SK-N-SH (cell line): ENCODE measurements at regions of chr17 and their contacts with region 1.

Region 1: DNA sequence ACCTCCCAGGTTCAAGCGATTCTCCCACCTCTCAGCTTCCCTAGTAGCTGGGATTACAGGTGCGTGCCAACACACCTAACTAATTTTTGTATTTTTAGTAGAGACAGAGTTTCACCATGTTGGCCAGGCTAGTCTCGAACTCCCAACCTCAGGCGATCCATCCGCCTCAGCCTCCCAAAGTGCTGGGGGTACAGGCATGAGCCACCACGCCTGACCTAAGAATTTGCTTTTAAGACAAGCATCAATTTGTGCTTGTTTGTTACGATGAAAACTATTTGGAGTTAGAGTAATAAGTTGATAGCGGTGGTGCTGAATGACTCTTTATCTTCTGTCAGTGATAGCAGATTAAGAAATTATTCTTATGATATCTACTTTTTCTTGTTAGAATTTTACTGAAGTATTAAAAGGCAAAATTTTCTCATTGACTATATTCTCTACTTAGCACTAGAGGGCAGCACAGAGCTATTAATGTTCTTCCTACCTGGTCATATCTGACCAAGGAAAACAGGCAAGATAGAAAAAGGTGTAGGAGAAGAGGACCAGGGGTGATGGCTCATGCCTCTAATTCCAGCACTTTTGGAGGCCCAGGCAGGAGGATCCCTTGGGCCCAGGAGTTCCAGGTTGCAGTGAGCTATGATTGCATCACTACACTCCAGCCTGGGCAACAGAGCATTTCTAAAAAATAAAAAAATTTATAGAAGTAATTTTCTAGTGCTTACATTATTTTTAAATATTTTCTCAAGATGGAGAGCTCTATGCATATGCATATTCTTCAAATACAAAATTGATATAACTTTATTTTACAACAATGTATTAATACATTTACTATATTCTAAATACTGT is 24.5 kb downstream of the STXBP4 start:
- DNase-seq: peak; percentile 59
- H3K4me3 ChIP-seq: no peak overlapping the region
- H3K27ac ChIP-seq: no peak overlapping the region
- H3K4me1 ChIP-seq: no peaks in the 10 kb centered on the region; a peak in 1 of 4 replicates
- H3K27me3 ChIP-seq: no peaks in the 10 kb centered on the region
- CTCF ChIP-seq: peak; percentile 96
- EP300 ChIP-seq: no peak
- RAD21 ChIP-seq: peak; percentile 91

Region 2: GRCh38 chr17:54909766-54910165 is 83.3 kb before region 1 on chr17:
- CTCF ChIA-PET with region 1: no interaction called
- POLR2A ChIA-PET with region 1: no interaction called
- DNase-seq: no peak
- H3K4me3 ChIP-seq: no peak overlapping the region
- H3K27ac ChIP-seq: no peak overlapping the region
- H3K4me1 ChIP-seq: peaks cover 0 to 3% of the 10 kb centered on the region in 2 experiments; a peak in 2 of 4 replicates
- H3K27me3 ChIP-seq: no peaks in the 10 kb centered on the region
- CTCF ChIP-seq: no peak
- EP300 ChIP-seq: no peak
- RAD21 ChIP-seq: no peak

Region 3: DNA sequence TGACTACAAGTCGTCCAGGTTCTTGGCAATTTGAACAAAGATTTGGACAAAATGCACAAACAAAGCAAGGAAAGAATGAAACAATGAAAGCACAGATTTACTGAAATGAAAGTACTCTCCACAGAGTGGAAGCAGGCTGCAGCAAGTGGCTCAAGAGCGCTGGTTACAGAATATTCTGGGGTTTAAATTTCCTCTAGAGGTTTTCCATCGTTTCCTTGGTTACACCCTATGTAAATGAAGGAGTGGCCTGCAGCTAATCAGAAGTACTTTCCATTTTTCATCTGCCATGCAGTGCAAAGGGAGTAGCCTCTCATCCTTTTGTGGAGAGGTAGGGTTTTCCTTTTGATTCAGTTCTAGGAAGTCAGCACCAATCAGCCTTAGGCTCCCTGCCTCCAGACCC is 12.6 kb before region 1 on chr17:
- CTCF ChIA-PET with region 1: interaction called, 11 read pairs
- POLR2A ChIA-PET with region 1: no interaction called
- DNase-seq: no peak
- H3K4me3 ChIP-seq: no peak overlapping the region
- H3K27ac ChIP-seq: no peak overlapping the region
- H3K4me1 ChIP-seq: peaks cover 0 to 11% of the 10 kb centered on the region in 2 experiments; a peak in 2 of 4 replicates
- H3K27me3 ChIP-seq: no peaks in the 10 kb centered on the region
- CTCF ChIP-seq: no peak
- EP300 ChIP-seq: no peak
- RAD21 ChIP-seq: no peak

Region 4: DNA sequence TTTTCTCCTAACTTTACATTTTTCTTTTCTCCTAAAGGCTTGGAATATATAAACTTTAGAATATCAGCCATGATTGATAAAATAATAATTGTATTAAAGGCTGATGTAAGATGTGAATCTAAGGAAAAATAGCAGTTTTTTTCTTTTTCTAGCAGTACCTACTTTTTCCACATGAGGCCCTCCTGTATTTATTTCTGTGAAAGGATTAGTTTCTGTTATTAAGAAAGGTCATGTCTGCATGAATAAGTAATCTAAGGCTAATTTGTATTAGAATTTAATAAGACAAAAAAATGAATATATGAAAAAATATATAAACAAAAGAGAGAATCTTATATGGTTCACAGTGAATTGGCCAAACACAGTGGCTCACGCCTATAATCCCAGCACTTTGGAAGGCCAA is 60.8 kb after region 1 on chr17:
- CTCF ChIA-PET with region 1: interaction called, 11 read pairs
- POLR2A ChIA-PET with region 1: no interaction called
- DNase-seq: peak; percentile 3
- H3K4me3 ChIP-seq: no peak overlapping the region
- H3K27ac ChIP-seq: no peak overlapping the region
- H3K4me1 ChIP-seq: peaks cover 5% of the 10 kb centered on the region in 2 experiments; a peak in 3 of 4 replicates
- H3K27me3 ChIP-seq: no peaks in the 10 kb centered on the region
- CTCF ChIP-seq: peak; percentile 82
- EP300 ChIP-seq: no peak
- RAD21 ChIP-seq: peak; percentile 86

Region 5: DNA sequence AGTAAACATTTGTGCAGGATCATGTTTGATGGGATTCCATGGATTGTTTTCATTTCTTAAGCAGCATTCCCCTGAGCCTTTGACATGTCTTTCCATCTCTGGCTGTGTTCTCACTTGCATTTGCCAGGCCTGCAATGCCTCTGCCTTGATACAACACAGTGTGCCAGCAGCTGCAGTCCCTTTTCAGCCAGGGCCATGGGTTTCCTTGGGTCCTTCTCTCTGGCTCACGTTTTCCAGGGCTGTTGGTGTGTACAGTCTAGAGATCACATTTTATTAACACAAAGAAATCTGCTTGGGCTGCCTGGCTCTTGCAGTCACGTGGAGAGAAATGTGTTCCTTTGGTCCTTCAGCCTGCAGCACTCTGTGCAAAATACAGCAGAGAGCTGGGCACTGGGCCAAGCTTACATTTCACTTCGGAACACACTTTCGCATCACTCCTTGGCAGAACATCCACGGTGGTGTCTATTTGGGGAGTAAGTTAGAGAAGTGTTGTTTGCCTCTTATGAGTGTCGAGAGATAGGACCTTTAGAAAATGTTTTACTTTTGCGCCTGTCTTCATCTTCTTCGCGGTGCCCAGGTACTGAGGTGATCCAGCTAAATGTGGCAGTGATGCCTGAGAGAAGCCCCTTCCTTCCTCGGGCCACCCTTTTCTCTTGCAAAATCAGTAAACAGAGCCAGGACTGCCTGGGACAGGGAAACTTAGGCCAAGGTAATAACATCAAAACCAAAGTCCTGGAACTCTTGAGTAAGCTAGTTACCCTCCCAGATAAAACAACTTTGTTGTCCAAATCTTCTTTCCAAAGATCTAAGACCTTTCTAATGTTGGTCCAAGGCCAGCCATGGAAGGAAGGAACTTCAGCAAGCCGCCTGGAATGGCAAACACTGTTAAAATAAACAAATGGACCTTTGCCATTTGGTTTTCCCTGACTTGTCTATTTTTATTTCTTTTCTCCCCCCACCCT is 292.6 kb after region 1 on chr17:
- CTCF ChIA-PET with region 1: interaction called, 18 read pairs
- POLR2A ChIA-PET with region 1: no interaction called
- DNase-seq: no peak
- H3K4me3 ChIP-seq: no peak overlapping the region
- H3K27ac ChIP-seq: peak overlapping the region in 1 of 2 experiments; percentile 51; a peak in 1 of 4 replicates
- H3K4me1 ChIP-seq: peaks cover 0 to 15% of the 10 kb centered on the region in 2 experiments; a peak in 1 of 4 replicates
- H3K27me3 ChIP-seq: no peaks in the 10 kb centered on the region
- CTCF ChIP-seq: no peak
- EP300 ChIP-seq: no peak
- RAD21 ChIP-seq: no peak

Region 6: GRCh38 chr17:55341432-55341831 is 348.4 kb after region 1 on chr17:
- CTCF ChIA-PET with region 1: interaction called, 90 read pairs
- POLR2A ChIA-PET with region 1: no interaction called
- DNase-seq: no peak
- H3K4me3 ChIP-seq: no peak overlapping the region
- H3K27ac ChIP-seq: no peak overlapping the region
- H3K4me1 ChIP-seq: peaks cover 0 to 3% of the 10 kb centered on the region in 2 experiments; a peak in 1 of 4 replicates
- H3K27me3 ChIP-seq: no peaks in the 10 kb centered on the region
- CTCF ChIP-seq: no peak
- EP300 ChIP-seq: no peak
- RAD21 ChIP-seq: no peak

Region 7: GRCh38 chr17:55356434-55357328 is 363.7 kb after region 1 on chr17:
- CTCF ChIA-PET with region 1: interaction called, 58 read pairs
- POLR2A ChIA-PET with region 1: no interaction called
- DNase-seq: peak; percentile 74
- H3K4me3 ChIP-seq: no peak overlapping the region
- H3K27ac ChIP-seq: no peak overlapping the region
- H3K4me1 ChIP-seq: no peaks in the 10 kb centered on the region; a peak in 1 of 4 replicates
- H3K27me3 ChIP-seq: no peaks in the 10 kb centered on the region
- CTCF ChIP-seq: peak; percentile 97
- EP300 ChIP-seq: peak in 1 of 2 experiments; percentile 38; a peak in 1 of 4 replicates
- RAD21 ChIP-seq: peak; percentile 88